ENCODE measurements at regions of chr10 and their contacts with region 1.

Region 1: GRCh38 chr10:92901819-92902251 is 53.5 kb downstream of the EXOC6 start:
- DNase-seq: peak in 32 of 35 experiments; percentile 1 to 80 (median 32)
- ATAC-seq: peak; percentile 70 to 96 (median 89)
- H3K4me3 ChIP-seq: peak overlapping the region; percentile 9 to 15
- H3K4me3 Mint-ChIP-seq: peak overlapping the region; percentile 53 to 61 (median 60)
- H3K27ac ChIP-seq: no peak overlapping the region
- H3K27ac Mint-ChIP-seq: peak overlapping the region; percentile 81 to 84
- H3K4me1 ChIP-seq: peaks cover 2 to 6% of the 10 kb centered on the region in 2 experiments
- H3K4me1 Mint-ChIP-seq: peaks cover 17 to 22% (median 17%) of the 10 kb centered on the region in 3 donors
- H3K27me3 ChIP-seq: no peaks in the 10 kb centered on the region
- H3K27me3 Mint-ChIP-seq: no peaks in the 10 kb centered on the region

Region 2: GRCh38 chr10:92880233-92880861 is 21.5 kb before region 1 on chr10:
- CTCF ChIA-PET with region 1: interaction called, 4 to 12 read pairs
- POLR2A ChIA-PET with region 1: no interaction called
- DNase-seq: peak in 3 of 35 experiments; percentile 3 to 55 (median 8)
- ATAC-seq: peak in 1 of 4 experiments; percentile 38
- H3K4me3 ChIP-seq: no peak overlapping the region
- H3K4me3 Mint-ChIP-seq: no peak overlapping the region
- H3K27ac ChIP-seq: no peak overlapping the region
- H3K27ac Mint-ChIP-seq: no peak overlapping the region
- H3K4me1 ChIP-seq: peaks cover 0 to 13% of the 10 kb centered on the region in 2 experiments
- H3K4me1 Mint-ChIP-seq: peaks cover 22 to 31% (median 25%) of the 10 kb centered on the region in 3 donors
- H3K27me3 ChIP-seq: no peaks in the 10 kb centered on the region
- H3K27me3 Mint-ChIP-seq: no peaks in the 10 kb centered on the region

Region 3: DNA sequence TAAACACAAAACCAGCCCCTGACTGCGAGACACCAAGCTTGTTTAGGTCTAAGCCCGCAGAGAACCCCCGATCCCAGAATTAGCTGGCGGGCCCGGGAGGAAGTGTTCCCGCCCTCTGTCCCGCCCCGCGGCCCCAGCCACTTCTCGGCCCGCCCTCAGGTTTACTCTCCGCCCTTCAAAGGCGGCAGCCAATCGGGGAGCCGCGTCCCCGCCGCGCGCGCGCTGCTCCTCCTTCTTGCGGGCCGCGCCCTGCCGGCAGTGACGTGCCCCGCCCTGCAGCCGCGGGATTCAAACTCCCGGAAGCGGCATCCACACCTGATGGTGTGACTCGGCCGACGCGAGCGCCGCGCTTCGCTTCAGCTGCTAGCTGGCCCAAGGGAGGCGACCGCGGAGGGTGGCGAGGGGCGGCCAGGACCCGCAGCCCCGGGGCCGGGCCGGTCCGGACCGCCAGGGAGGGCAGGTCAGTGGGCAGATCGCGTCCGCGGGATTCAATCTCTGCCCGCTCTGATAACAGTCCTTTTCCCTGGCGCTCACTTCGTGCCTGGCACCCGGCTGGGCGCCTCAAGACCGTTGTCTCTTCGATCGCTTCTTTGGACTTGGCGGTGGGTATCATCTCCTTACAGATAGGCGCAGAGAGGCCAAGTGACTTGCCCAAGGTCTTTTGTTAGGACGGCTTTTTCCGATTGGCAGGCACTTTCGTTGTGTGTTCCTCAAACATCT is 594.6 kb after region 1 on chr10 and contains the start of gene CEP55:
- CTCF ChIA-PET with region 1: no interaction called
- POLR2A ChIA-PET with region 1: interaction called in 1 of 2 experiments, 10 read pairs
- DNase-seq: peak; percentile 84 to 96 (median 93)
- ATAC-seq: peak; percentile 99 to 100 (median 100)
- H3K4me3 ChIP-seq: peak within 1 kb of the TSS; percentile 65 to 89
- H3K4me3 Mint-ChIP-seq: peak within 1 kb of the TSS; percentile 88 to 92 (median 88)
- H3K27ac ChIP-seq: no peak within 1 kb of the TSS
- H3K27ac Mint-ChIP-seq: peak within 1 kb of the TSS; percentile 52 to 71
- H3K4me1 ChIP-seq: peaks cover 4 to 20% of the 10 kb centered on the region in 2 experiments
- H3K4me1 Mint-ChIP-seq: peaks cover 14 to 23% (median 20%) of the 10 kb centered on the region in 3 donors
- H3K27me3 ChIP-seq: no peaks in the 10 kb centered on the region
- H3K27me3 Mint-ChIP-seq: peaks cover 8% of the 10 kb centered on the region in 2 donors
- total RNA-seq, gene CEP55: 0.35 to 0.95 (median 0.49) TPM